HepG2 (cell line): ENCODE measurements at regions of chr12 and their contacts with region 1.

Region 1: DNA sequence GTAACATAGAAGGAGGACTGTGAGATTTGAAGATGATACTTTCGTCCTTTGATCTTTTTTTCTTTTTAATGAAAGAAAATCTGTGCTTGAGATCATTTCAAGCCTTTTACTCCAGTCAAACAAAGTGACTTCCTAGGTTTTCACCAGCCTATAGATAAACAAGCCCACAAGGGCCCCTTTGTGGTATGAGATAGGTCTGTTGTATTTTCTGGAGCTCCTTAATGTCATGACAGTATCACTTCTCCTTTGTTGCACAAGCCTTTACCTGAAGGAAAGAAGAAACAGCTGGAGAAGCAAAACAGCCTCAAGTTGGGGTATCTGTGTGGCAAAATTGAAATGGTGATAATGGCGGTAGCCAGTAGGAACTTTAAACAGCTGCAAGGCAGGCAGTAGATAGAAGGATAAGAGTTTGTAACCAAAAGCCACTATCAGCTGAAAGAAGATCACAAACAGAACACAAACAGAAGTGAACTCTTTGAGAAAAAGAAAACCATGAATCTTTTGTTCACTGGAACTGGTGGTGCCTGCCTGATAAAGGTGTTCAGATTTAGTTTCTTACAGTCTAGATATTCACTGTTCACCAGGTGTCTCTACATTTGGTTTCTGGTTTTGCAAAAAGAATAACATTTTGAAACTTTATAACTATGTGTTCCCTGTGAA is 96.8 kb downstream of the LGR5 start:
- DNase-seq: peak; percentile 76
- ATAC-seq: peak; percentile 71
- H3K4me3 ChIP-seq: peak overlapping the region in 1 of 3 experiments; percentile 7; a peak in 1 of 6 replicates
- H3K27ac ChIP-seq: peak overlapping the region; percentile 74
- H3K4me1 ChIP-seq: peaks cover 50% of the 10 kb centered on the region
- H3K27me3 ChIP-seq: no peaks in the 10 kb centered on the region
- CTCF ChIP-seq: no peak
- EP300 ChIP-seq: peak in 1 of 2 experiments; percentile 43; a peak in 2 of 4 replicates
- POLR2A ChIP-seq: no peak
- RAD21 ChIP-seq: no peak

Region 2: DNA sequence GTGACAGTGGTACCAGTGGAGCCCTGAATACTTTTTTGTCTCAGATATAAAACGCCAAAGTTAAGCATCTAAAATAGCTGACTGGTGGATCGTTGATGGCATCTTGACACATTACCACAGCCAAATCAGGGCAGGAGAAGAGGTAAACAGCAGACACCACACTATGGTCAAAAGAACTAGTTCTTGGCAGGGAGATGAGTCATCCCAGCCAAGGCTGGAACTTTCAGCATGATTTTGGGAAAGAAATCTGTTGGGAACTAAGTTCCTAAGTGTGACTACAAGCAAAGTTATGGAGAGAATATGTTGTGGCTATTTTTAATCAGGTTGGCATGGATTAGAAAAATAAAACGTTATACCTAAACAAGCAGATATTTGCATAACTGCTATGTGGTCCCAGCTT is 59.9 kb before region 1 on chr12:
- CTCF ChIA-PET with region 1: no interaction called
- POLR2A ChIA-PET with region 1: no interaction called
- in situ Hi-C with region 1: no loop called
- intact Hi-C with region 1: loop called (anchors 1 kb)
- DNase-seq: no peak
- ATAC-seq: no peak
- H3K4me3 ChIP-seq: no peak overlapping the region
- H3K27ac ChIP-seq: no peak overlapping the region
- H3K4me1 ChIP-seq: peaks cover 27% of the 10 kb centered on the region
- H3K27me3 ChIP-seq: no peaks in the 10 kb centered on the region
- CTCF ChIP-seq: no peak
- EP300 ChIP-seq: no peak
- POLR2A ChIP-seq: no peak
- RAD21 ChIP-seq: no peak

Region 3: GRCh38 chr12:71551529-71551928 is 15.1 kb after region 1 on chr12:
- CTCF ChIA-PET with region 1: no interaction called
- POLR2A ChIA-PET with region 1: interaction called, 24 read pairs
- in situ Hi-C with region 1: no loop called
- intact Hi-C with region 1: loop called (anchors 1 kb)
- DNase-seq: no peak
- ATAC-seq: no peak
- H3K4me3 ChIP-seq: no peak overlapping the region
- H3K27ac ChIP-seq: no peak overlapping the region
- H3K4me1 ChIP-seq: peaks cover 48% of the 10 kb centered on the region
- H3K27me3 ChIP-seq: no peaks in the 10 kb centered on the region
- CTCF ChIP-seq: peak; percentile 34
- EP300 ChIP-seq: no peak
- POLR2A ChIP-seq: no peak
- RAD21 ChIP-seq: no peak